PC-9 (cell line): ENCODE measurements at regions of chr17 and their contacts with region 1.

Region 1: DNA sequence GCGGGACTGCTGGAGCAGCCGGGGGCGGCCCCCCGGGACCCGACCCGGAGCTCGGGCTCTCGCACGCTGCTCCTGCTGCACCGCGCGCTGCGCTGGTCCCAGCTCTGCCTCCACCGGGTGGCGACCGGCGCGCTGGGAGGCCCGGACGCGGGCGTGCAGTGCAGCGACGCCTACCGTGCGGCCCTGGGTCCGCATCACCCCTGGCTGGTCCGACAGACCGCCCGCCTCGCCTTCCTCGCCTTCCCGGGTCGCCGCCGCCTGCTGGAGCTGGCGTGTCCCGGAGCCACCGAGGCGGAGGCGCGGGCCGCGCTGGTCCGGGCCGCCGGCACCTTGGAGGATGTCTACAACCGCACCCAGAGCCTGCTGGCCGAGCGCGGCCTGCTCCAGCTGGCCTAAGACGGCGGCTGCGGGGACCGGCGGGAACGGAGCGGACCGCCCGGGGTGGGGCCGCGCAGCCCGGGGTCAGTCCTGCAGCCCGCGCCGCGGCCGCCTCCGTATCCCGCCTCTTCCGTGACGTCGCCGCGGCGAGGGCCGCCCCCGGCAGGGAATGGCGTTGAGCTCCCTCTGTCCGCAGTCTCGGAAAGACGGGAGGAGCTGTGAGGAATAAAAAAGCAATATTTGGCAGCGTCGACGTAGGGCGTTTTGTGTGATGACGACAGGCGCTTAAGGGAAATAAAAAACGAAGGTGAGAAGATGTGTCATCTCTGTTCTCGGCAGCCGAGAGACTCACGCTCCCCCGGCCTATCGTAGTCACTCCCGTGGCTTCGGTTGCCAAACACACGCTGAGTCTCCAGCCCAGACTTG is 1.3 kb downstream of the GLTPD2 start:
- DNase-seq: peak; percentile 84 to 92
- H3K4me3 ChIP-seq: peak overlapping the region; percentile 84
- H3K27ac ChIP-seq: peak overlapping the region; percentile 69
- H3K4me1 ChIP-seq: peaks cover 20% of the 10 kb centered on the region
- H3K27me3 ChIP-seq: no peaks in the 10 kb centered on the region
- CTCF ChIP-seq: peak; percentile 70

Region 2: GRCh38 chr17:4449736-4450135 is 340.4 kb before region 1 on chr17:
- CTCF ChIA-PET with region 1: no interaction called
- POLR2A ChIA-PET with region 1: no interaction called
- intact Hi-C with region 1: no loop called
- DNase-seq: peak in 1 of 2 experiments; percentile 64
- H3K4me3 ChIP-seq: no peak overlapping the region
- H3K27ac ChIP-seq: no peak overlapping the region
- H3K4me1 ChIP-seq: peaks cover 34% of the 10 kb centered on the region
- H3K27me3 ChIP-seq: no peaks in the 10 kb centered on the region
- CTCF ChIP-seq: no peak

Region 3: DNA sequence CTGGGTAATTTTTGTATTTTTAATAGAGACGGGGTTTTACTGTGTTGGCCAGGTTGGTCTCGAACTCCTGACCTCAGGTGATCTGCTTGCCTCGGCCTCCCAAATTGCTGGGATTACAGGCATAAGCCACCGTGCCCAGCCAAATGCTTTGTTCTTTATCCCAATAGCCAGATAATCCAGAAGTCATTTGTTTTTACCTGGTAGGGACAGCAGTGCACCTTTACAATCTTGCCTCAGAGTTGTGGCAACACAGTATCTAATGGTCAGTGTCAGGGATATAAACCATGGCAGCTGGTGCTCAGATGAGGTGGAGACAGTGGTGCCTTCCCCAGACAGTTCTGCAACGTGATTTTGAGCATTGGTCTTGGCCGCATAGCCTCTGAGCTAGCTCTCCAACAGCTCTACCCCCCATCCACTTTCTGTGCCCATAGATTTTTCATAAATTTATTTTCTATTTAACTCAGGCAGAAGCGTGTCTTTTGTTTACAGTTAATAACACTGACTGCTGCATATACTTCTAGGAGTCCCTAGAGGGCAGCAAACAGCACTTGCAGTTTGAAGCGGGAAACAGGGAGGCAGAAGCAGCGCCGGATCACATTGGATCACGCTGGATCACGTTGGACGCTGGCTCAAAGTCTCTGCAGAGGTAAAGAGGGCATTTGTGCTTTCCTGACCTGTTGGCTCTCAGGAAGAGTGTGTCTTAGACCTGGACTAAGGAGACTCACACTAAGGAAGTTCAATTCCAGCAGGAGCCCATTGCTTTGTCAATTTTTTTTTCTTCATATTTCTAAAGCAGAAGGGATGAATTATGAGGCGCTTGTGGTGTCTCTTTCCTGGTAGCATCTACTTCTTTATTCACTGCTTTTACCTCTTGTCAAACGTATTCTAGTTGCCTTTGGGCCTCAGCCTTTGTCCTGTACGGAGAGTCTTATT is 224.6 kb before region 1 on chr17:
- CTCF ChIA-PET with region 1: interaction called, 3 read pairs
- POLR2A ChIA-PET with region 1: no interaction called
- intact Hi-C with region 1: loop called (anchors 10 kb)
- DNase-seq: peak; percentile 54 to 70
- H3K4me3 ChIP-seq: no peak overlapping the region
- H3K27ac ChIP-seq: no peak overlapping the region
- H3K4me1 ChIP-seq: peaks cover 4% of the 10 kb centered on the region; the same call in 1 of the 2 replicates
- H3K27me3 ChIP-seq: no peaks in the 10 kb centered on the region
- CTCF ChIP-seq: peak; percentile 94

Region 4: DNA sequence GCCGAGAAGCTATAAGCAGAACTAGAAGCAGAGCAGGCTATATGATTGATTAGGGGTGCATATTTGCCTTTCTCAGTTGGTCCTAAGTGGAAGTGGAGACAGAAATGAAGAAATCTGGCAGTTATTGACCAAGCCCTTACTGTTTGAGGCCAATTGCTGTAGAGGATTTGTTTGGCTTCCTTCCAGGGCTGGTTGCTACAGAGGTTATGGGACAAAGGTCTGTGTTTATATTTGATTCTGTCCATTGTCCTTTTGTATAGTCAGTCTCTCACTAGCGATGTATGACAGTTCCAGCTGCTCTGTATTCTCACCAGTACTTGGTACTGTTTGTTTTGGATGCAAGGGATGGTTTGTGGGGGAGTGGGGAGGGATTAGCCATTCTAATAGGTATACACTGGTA is 141.4 kb before region 1 on chr17:
- CTCF ChIA-PET with region 1: no interaction called
- POLR2A ChIA-PET with region 1: no interaction called
- intact Hi-C with region 1: no loop called
- DNase-seq: no peak
- H3K4me3 ChIP-seq: no peak overlapping the region
- H3K27ac ChIP-seq: no peak overlapping the region
- H3K4me1 ChIP-seq: no peaks in the 10 kb centered on the region
- H3K27me3 ChIP-seq: no peaks in the 10 kb centered on the region
- CTCF ChIP-seq: no peak

Region 5: GRCh38 chr17:4709794-4710692 is 80.1 kb before region 1 on chr17 and contains the start of gene ARRB2:
- CTCF ChIA-PET with region 1: interaction called, 18 read pairs
- POLR2A ChIA-PET with region 1: interaction called, 10 read pairs
- intact Hi-C with region 1: loop called (anchors 1 kb)
- DNase-seq: peak; percentile 91 to 99
- H3K4me3 ChIP-seq: peak within 1 kb of the TSS; percentile 73
- H3K27ac ChIP-seq: peak within 1 kb of the TSS; percentile 56
- H3K4me1 ChIP-seq: peaks cover 17% of the 10 kb centered on the region
- H3K27me3 ChIP-seq: no peaks in the 10 kb centered on the region
- CTCF ChIP-seq: peak; percentile 71
- total RNA-seq, gene ARRB2: 79.7 and 110 TPM in 2 replicates

Region 6: DNA sequence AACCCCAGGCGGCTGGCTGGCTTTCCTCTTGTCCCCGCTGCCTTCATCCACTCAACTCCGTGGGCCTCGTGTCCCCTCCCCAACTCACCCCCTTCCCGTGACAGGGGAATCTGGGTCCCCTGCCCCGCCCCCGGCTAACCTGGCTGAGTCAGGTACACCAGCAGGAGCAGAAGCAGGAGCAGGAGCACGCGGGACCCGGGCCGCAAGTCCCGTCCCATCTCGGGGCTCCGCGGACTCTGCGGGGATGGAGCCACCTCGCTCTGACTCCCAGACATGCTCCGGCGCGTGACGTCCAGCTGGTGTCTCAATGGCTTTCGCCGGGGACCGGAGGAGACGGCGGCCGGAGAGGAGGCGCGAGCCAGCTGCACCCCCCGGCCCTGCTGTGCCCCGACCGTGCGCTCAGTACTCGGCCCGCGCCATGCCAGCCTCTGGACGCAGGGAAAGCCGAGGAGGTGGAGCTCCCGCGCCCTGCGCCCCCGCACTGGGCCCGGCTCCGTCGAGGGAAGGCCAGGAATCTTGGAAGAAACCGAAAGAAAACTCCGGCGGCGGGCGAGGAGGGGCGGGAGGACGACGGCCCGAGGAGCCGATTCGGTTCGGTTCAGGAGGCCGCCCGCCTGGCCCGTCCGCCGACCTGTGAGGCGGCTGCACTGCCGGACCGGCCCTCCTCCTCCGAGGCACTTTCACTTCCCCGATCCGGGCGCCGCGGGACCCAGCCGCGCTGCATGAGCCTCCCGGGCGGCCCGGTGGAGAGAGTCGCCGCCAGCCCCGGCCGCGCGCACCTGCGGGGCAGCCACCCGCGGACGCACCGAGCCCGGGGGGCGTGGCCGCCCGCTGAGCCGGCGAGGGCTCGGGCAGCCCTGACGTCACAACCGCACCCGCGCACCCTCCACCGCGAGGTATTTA is 50.7 kb before region 1 on chr17 and contains the starts of genes CXCL16 and ZMYND15:
- CTCF ChIA-PET with region 1: interaction called, 13 read pairs
- POLR2A ChIA-PET with region 1: no interaction called
- intact Hi-C with region 1: no loop called
- DNase-seq: peak in 1 of 2 experiments; percentile 75
- H3K4me3 ChIP-seq: peak within 1 kb of the TSS; percentile 95
- H3K27ac ChIP-seq: peak within 1 kb of the TSS; percentile 75
- H3K4me1 ChIP-seq: peaks cover 12% of the 10 kb centered on the region; the same call in 1 of the 2 replicates
- H3K27me3 ChIP-seq: 0 out of 2 replicates have a peak, but pooled peaks cover 6% of the 10 kb centered on the region
- CTCF ChIP-seq: 0 out of 2 replicates have a peak, but pooled peaks have one; percentile 3
- total RNA-seq, gene CXCL16: 52.4 and 60.2 TPM in 2 replicates
- total RNA-seq, gene ZMYND15: 2.3 and 5.4 TPM in 2 replicates

Region 7: DNA sequence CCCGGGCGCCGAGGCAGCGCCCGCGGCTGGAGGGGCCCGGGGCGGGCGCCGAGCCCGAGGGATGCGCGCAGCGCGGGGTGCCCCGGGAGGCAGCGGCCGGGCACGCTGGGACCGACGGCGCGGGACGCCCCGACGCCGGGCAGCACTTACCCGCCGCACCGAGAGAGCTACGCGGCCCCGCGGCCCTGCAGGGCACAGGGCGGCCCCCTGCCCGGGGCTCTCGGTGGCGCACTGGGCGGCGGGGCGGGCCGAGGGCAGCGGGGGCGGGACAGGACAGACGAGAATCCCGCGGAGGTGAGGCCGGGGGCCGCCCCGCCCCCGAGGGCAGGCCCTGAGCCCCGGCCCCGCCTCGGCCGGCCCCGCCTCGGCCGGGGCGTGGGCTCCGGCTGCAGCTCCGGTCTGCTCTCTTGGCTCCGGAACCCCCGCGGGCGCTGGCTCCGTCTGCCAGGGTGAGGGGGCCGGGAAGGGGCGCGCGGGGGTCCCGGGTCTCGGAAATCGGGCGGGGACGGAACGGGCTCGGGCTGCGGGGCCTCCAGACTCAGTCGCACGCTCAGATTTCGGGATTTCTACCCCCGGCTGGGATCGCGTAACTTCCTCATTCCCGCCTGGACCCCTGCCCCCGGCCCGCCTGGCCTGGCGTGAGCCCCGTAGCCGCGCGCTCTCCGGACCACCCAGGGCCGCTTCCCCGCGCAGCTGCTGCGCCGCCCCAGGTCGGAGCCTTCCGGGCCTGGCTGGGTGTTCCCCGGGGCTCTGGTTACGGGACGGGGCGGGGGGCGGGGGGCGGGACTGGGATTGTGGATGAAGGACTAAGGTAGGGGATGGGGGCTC is 16.9 kb after region 1 on chr17 and contains the start of gene PLD2:
- CTCF ChIA-PET with region 1: interaction called, 18 read pairs
- POLR2A ChIA-PET with region 1: interaction called, 12 read pairs
- intact Hi-C with region 1: no loop called
- DNase-seq: peak; percentile 63 to 93
- H3K4me3 ChIP-seq: peak within 1 kb of the TSS; percentile 68
- H3K27ac ChIP-seq: no peak within 1 kb of the TSS
- H3K4me1 ChIP-seq: peaks cover 37% of the 10 kb centered on the region
- H3K27me3 ChIP-seq: no peaks in the 10 kb centered on the region
- CTCF ChIP-seq: no peak
- total RNA-seq, gene PLD2: 95.5 and 116 TPM in 2 replicates

Region 8: GRCh38 chr17:4881761-4882555 is 91.9 kb after region 1 on chr17:
- CTCF ChIA-PET with region 1: interaction called, 3 read pairs
- POLR2A ChIA-PET with region 1: no interaction called
- intact Hi-C with region 1: loop called (anchors 1 kb)
- DNase-seq: peak; percentile 60 to 76
- H3K4me3 ChIP-seq: no peak overlapping the region
- H3K27ac ChIP-seq: no peak overlapping the region
- H3K4me1 ChIP-seq: no peaks in the 10 kb centered on the region
- H3K27me3 ChIP-seq: no peaks in the 10 kb centered on the region
- CTCF ChIP-seq: peak; percentile 92

Region 9: DNA sequence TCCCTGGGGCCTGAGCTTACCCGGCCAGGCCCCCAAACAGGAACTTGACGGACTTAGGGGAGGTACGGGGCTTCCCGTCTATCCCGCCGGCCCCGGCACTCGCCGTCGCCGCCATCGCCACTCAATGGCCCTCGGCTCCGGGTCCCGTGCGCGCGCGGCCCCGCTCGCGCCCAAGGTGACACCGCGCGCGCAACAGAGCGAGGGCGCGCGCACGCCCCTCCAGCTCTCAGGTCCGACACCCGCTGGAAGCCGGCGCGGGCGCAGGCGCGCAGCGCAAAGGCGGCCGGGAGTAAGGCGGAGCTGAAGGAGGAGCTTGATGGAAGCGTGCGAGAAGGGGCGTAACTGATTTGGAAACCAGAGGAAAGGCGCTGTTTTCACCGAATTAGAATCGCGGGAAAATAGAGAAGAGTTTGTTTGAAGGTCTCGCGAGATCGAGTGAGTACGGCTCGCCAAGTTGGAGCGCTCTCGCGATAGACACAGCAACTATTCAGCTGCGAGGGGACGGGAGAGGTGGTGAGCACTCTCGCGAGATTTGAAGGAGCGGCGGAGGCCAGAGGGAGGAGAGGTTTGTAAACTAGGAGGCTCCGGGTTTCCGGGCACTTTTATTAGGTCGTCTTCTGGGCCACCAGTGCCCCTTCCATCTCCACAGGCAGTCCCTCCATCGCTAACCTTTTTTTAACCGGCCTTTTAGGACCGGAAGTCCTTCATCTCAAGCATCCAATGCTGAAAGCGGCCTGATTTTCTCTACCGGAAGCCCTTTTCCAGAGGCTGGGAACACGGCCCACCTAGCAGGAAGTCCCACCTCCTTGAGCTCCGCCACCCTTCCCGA is 149.9 kb after region 1 on chr17 and contains the starts of genes RNF167 and SLC25A11:
- CTCF ChIA-PET with region 1: interaction called, 3 read pairs
- POLR2A ChIA-PET with region 1: interaction called, 14 read pairs
- intact Hi-C with region 1: no loop called
- DNase-seq: peak; percentile 98
- H3K4me3 ChIP-seq: peak within 1 kb of the TSS; percentile 93
- H3K27ac ChIP-seq: peak within 1 kb of the TSS; percentile 87
- H3K4me1 ChIP-seq: peaks cover 25% of the 10 kb centered on the region
- H3K27me3 ChIP-seq: no peaks in the 10 kb centered on the region
- CTCF ChIP-seq: no peak
- total RNA-seq, gene RNF167: 122 and 135 TPM in 2 replicates
- total RNA-seq, gene SLC25A11: 50.7 and 56.2 TPM in 2 replicates